ENCODE measurements at regions of chr7 and their contacts with region 1.

Region 1: DNA sequence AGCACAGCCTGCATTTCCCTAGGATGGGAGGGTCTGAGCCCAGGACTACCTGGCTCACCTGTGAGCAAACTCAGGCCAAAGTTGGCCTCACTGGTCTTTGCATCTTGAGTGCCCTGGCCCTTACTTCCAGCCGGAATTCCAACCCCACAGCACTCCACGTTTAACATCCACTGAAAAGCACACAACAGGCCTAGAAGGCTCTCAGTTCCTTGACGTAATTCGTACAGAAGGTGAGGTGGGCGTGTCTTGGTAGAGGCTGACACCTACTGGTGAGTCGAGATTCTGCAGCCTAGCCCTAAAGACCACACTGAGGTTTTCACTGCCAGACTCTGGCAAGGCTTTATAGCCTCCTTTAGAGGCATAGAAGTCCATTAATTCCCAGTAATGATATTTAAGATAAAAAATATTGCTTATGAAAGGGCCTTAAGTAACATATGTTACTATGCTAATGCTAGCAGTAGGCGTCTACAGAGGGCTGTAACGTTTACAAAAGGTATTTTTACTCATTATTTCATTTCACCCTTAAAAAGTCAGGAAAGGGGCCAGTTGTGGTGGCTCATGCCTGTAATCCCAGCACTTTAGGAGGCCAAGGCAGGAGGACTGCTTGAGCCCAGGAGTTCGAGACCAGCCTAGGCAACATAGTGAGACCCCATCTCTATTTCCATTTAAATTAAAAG is 95.8 kb downstream of the HIP1 start:
- DNase-seq: peak in 1 of 2 donors; percentile 21
- ATAC-seq: peak in 1 of 8 donors; percentile 26
- H3K4me3 ChIP-seq: no peak overlapping the region
- H3K27ac ChIP-seq: no peak overlapping the region
- H3K4me1 ChIP-seq: peaks cover 8 to 19% (median 15%) of the 10 kb centered on the region in 9 donors
- H3K27me3 ChIP-seq: no peaks in the 10 kb centered on the region
- CTCF ChIP-seq: peak; percentile 41 to 90 (median 63)

Region 2: DNA sequence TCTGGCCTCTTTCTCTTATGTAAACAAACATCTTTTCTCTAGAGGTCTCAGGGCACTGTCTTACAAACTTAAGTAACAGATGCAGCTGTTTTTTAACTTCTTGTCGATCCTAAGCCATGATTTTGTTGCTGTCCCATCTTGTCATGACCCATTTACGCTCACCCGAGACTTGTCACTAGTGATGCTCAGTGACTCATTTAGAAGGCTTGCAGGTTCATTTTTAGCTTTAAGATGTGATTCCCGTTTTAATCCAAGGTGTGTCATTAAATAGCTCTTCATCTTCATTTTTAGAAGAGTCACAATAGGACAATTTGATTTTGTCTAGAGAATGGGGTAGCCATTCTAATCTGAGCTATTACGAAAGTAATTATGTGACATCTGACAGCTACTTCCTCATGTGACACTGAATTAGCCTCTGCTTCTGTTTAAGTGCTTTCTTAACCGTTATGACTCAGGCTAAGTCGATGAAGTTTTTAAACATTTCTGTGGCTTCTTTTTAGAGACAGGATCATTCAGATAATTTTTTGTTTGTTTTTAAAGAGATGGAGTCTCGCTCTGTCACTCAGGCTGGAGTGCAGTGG is 108.1 kb before region 1 on chr7:
- intact Hi-C with region 1: loop called in 1 of 10 experiments (anchors 10 kb)
- DNase-seq: no peak
- ATAC-seq: no peak
- H3K4me3 ChIP-seq: no peak overlapping the region
- H3K27ac ChIP-seq: peak overlapping the region in 1 of 10 donors; percentile 62
- H3K4me1 ChIP-seq: peaks cover 0 to 6% (median 0%) of the 10 kb centered on the region in 9 donors
- H3K27me3 ChIP-seq: no peaks in the 10 kb centered on the region
- CTCF ChIP-seq: no peak

Region 3: DNA sequence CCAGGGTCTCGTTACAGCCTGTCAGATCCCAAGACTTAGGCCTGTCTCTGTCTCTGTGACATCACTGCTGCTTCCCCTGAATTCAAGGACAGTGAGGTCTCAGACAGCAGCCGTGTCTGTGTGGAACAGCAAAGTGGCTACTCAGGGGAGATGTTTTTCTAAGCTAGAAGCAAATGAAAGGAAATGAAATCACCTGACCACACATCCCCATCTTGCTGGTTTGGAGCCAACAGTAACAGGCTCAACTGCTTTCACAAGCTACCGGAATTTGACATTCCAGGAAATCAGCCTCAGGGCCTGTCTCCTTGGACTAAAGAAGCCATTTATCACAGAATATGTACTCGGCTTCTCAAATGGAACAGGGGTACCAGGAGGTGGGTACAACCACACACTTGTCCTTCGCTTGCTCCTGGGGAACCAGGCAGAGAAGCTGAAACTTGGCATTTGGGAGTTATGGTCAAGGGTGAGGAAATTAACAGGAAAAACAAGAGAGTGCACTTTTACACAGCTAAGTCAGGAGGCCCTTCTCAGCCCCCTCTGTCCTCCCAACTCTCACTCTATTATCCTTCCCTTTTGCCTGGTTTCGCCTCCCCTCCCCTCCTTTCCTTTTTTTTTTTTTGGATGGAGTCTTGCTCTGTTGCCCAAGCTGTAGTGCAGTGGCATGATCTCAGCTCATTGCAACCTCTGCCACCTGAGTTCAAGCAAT is 77.7 kb before region 1 on chr7:
- intact Hi-C with region 1: loop called in 1 of 10 experiments (anchors 10 kb)
- DNase-seq: peak in 1 of 2 donors; percentile 72
- ATAC-seq: peak; percentile 56 to 84 (median 80)
- H3K4me3 ChIP-seq: no peak overlapping the region
- H3K27ac ChIP-seq: peak overlapping the region; percentile 50 to 85 (median 70)
- H3K4me1 ChIP-seq: peaks cover 0 to 34% (median 16%) of the 10 kb centered on the region in 9 donors
- H3K27me3 ChIP-seq: no peaks in the 10 kb centered on the region
- CTCF ChIP-seq: no peak

Region 4: GRCh38 chr7:75584354-75584753 is 58.6 kb before region 1 on chr7:
- intact Hi-C with region 1: loop called in 1 of 10 experiments (anchors 10 kb)
- DNase-seq: no peak
- ATAC-seq: peak in 5 of 8 donors; percentile 24 to 58 (median 33)
- H3K4me3 ChIP-seq: no peak overlapping the region
- H3K27ac ChIP-seq: no peak overlapping the region
- H3K4me1 ChIP-seq: no peaks in the 10 kb centered on the region
- H3K27me3 ChIP-seq: no peaks in the 10 kb centered on the region
- CTCF ChIP-seq: no peak

Region 5: GRCh38 chr7:75738987-75739795 is 96.2 kb after region 1 on chr7:
- intact Hi-C with region 1: loop called in 2 of 10 experiments (anchors 10 kb)
- DNase-seq: peak; percentile 100
- ATAC-seq: peak; percentile 97 to 99 (median 98)
- H3K4me3 ChIP-seq: peak overlapping the region; percentile 73 to 100 (median 95)
- H3K27ac ChIP-seq: peak overlapping the region; percentile 70 to 95 (median 88)
- H3K4me1 ChIP-seq: peaks cover 2 to 40% (median 26%) of the 10 kb centered on the region in 9 donors
- H3K27me3 ChIP-seq: no peaks in the 10 kb centered on the region
- CTCF ChIP-seq: peak in 6 of 9 donors; percentile 6 to 40 (median 24)

Region 6: DNA sequence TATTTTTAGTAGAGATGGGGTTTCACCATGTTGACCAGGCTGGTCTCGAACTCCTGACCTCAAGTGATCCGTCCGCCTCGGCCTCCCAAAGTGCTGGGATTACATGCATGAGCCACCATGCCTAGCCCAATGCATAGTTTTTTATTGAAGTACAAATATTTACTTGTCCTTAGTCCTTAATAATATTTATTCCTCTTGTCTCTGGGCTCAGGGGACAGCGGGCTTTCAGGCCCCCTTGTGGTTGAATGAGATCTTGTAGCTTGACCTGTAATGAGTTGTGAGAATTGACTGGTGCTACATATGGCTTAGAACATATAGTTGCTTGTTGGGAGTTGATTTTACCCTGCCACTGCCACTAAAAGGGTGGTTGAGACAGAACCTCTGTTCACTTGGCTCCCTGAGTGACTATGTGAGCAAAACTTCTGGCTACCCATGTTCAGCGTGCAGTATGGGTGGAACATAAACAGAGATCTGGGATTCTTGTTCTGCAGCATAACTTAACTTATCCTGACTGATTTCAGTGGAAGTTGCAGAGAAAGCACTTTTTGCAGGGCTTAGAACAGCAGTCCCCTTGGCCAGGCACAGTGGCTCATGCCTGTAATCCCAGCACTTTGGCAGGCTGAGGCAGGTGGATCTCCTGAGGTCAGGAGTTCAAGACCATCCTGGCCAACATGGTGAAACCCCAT is 114.2 kb after region 1 on chr7:
- intact Hi-C with region 1: loop called in 2 of 10 experiments (anchors 10 kb)
- DNase-seq: peak in 1 of 2 donors; percentile 17
- ATAC-seq: peak in 1 of 8 donors; percentile 53
- H3K4me3 ChIP-seq: no peak overlapping the region
- H3K27ac ChIP-seq: no peak overlapping the region
- H3K4me1 ChIP-seq: peaks cover 0 to 1% (median 0%) of the 10 kb centered on the region in 9 donors
- H3K27me3 ChIP-seq: no peaks in the 10 kb centered on the region
- CTCF ChIP-seq: peak in 8 of 9 donors; percentile 11 to 54 (median 46)

Region 7: DNA sequence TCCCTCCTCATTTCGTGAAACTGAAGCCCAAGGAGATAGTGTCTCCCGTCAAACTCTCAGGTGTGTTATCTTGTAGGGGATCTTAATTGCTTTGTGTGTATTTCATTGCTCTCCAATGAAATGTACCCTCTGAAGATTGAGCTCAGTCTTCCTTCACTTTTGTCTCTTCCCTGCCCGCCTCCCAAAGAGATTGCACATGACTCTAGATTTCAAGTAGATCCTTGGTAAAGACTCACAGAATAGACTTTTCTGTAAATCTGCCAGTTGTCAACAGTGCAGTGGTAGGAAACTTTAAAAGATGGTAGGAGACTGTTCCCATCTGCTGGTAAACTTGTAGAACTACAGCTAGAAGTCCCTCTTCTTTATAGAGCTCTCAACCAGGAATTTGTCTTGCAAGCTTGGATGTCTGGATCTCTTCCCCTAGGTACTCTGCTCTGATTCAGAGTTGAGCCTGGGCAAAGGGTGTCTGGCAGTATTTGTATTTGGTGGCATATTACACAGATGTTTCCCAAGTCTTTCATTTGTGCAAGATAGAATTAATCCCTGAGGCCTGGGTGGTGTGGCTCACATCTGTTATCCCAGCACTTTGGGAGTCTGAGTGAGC is 119.5 kb after region 1 on chr7:
- intact Hi-C with region 1: loop called in 2 of 10 experiments (anchors 10 kb)
- DNase-seq: no peak
- ATAC-seq: peak; percentile 75 to 95 (median 92)
- H3K4me3 ChIP-seq: no peak overlapping the region
- H3K27ac ChIP-seq: no peak overlapping the region
- H3K4me1 ChIP-seq: peaks cover 0 to 7% (median 0%) of the 10 kb centered on the region in 9 donors
- H3K27me3 ChIP-seq: no peaks in the 10 kb centered on the region
- CTCF ChIP-seq: peak; percentile 67 to 89 (median 79)

Region 8: DNA sequence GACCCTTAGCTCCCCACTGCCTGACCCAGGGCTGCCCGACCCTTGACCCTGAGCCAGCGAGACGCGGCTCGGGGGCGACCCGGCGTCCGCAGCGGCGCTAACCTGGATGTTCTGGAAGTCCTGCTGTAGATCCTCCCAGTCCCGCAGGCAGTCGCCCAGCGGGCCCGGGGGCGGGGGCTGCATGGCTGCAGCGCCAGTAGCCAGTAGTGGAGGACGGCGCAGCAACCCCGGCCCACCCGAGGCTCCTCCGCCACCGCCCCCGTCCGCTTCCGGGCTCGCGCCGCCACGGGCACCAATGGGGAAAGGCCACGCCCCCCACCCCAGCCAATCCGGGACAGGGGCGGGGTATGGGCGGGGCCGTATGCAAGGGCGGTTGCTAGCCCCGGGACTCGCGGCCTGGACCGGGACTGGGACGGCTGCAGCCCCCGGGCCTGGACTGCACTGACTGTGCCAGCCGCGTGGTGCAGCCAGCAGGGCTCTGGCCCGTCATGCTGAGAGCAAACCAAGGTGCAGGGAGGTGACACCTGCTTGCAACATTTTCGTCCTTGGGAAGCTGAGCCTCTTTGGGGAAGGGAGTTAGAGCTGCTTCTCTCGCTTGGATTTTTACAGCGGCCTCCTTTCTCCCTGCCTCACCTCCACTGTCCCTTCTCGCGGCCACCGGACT is 351.6 kb after region 1 on chr7 and contains the start of gene TMEM120A:
- intact Hi-C with region 1: no loop called
- DNase-seq: peak; percentile 97 to 99
- ATAC-seq: peak; percentile 89 to 95 (median 94)
- H3K4me3 ChIP-seq: peak within 1 kb of the TSS; percentile 64 to 98 (median 81)
- H3K27ac ChIP-seq: peak within 1 kb of the TSS; percentile 90 to 99 (median 97)
- H3K4me1 ChIP-seq: peaks cover 20 to 55% (median 44%) of the 10 kb centered on the region in 9 donors
- H3K27me3 ChIP-seq: no peaks in the 10 kb centered on the region
- CTCF ChIP-seq: peak in 8 of 9 donors; percentile 13 to 51 (median 31)
- total RNA-seq, gene TMEM120A: 132 to 192 (median 149) TPM